Right cardiac atrium (tissue), 5 donors: ENCODE measurements at regions of chr1 and their contacts with region 1.

Region 1: GRCh38 chr1:197614916-197615692 is 160.2 kb downstream of the DENND1B start:
- DNase-seq: peak in 1 of 3 donors; percentile 27
- ATAC-seq: peak; percentile 76 to 78
- H3K4me3 ChIP-seq: no peak overlapping the region
- H3K27ac ChIP-seq: no peak overlapping the region
- H3K4me1 ChIP-seq: no peaks in the 10 kb centered on the region
- H3K27me3 ChIP-seq: no peaks in the 10 kb centered on the region

Region 2: DNA sequence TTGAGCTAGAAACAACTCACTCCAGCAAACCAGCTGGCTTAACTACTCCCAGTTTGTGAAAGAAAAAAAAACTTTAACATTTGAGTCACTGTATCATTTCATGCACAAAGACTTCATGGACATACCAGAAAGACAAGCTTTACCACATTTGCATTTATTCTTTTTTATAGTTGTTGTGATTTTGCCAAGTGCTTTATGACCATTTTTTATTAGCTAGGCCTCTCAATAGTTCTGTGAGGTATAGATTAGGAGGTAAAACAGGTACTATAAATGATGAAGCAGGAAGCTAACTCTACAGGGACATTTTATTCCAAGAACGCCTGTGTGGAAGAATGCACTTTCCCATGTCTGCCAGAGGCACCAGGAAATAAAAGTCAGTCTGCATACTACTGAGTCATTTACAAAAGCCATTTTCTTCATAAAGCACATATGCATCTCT is 168.4 kb after region 1 on chr1:
- intact Hi-C with region 1: loop called in 1 of 4 experiments (anchors 10 kb)
- DNase-seq: no peak
- ATAC-seq: no peak
- H3K4me3 ChIP-seq: no peak overlapping the region
- H3K27ac ChIP-seq: no peak overlapping the region
- H3K4me1 ChIP-seq: no peaks in the 10 kb centered on the region
- H3K27me3 ChIP-seq: no peaks in the 10 kb centered on the region

Region 3: GRCh38 chr1:197868751-197869489 is 253.8 kb after region 1 on chr1:
- intact Hi-C with region 1: loop called (anchors 2 to 10 kb)
- DNase-seq: no peak
- ATAC-seq: peak; percentile 81 to 89
- H3K4me3 ChIP-seq: no peak overlapping the region
- H3K27ac ChIP-seq: no peak overlapping the region
- H3K4me1 ChIP-seq: no peaks in the 10 kb centered on the region
- H3K27me3 ChIP-seq: no peaks in the 10 kb centered on the region

Region 4: GRCh38 chr1:197915862-197916499 is 300.9 kb after region 1 on chr1:
- intact Hi-C with region 1: loop called in 3 of 4 experiments (anchors 10 kb)
- DNase-seq: peak; percentile 75 to 85 (median 84)
- ATAC-seq: peak; percentile 54 to 69
- H3K4me3 ChIP-seq: peak overlapping the region; percentile 39
- H3K27ac ChIP-seq: no peak overlapping the region
- H3K4me1 ChIP-seq: peaks cover 10% of the 10 kb centered on the region
- H3K27me3 ChIP-seq: no peaks in the 10 kb centered on the region

Region 5: GRCh38 chr1:197924516-197925123 is 309.5 kb after region 1 on chr1:
- intact Hi-C with region 1: loop called in 3 of 4 experiments (anchors 10 kb)
- DNase-seq: no peak
- ATAC-seq: peak; percentile 48 to 59
- H3K4me3 ChIP-seq: no peak overlapping the region
- H3K27ac ChIP-seq: no peak overlapping the region
- H3K4me1 ChIP-seq: no peaks in the 10 kb centered on the region
- H3K27me3 ChIP-seq: no peaks in the 10 kb centered on the region